Breast epithelium (tissue), 4 donors: ENCODE measurements at regions of chr1 and their contacts with region 1.

Region 1: DNA sequence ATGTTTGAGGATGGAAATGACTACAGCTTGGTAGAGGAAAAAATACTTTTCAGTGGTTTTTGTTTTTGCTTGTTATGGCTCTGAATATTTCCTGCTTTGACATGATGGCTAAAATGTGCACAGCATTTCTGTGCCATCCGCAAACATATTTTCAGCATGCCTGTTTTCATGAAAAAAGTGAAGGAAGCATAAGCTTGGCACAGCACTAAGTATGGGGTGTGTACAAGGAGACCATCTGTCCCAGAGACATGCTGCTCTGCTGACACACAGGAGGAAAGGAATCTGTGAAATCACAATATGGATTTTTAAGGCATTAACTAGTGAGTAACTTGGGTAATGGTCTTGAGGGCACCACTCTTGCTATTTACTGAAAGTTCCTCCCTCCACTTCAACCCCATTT is 595.5 kb downstream of the RWDD3 start:
- DNase-seq: no peak
- H3K4me3 ChIP-seq: no peak overlapping the region
- H3K27ac ChIP-seq: no peak overlapping the region
- H3K4me1 ChIP-seq: no peaks in the 10 kb centered on the region
- H3K27me3 ChIP-seq: no peaks in the 10 kb centered on the region
- CTCF ChIP-seq: no peak
- POLR2A ChIP-seq: no peak

Region 2: GRCh38 chr1:97739596-97740103 is 1910.1 kb after region 1 on chr1:
- intact Hi-C with region 1: loop called (anchors 5 kb)
- DNase-seq: no peak
- H3K4me3 ChIP-seq: no peak overlapping the region
- H3K27ac ChIP-seq: no peak overlapping the region
- H3K4me1 ChIP-seq: no peaks in the 10 kb centered on the region
- H3K27me3 ChIP-seq: no peaks in the 10 kb centered on the region
- CTCF ChIP-seq: no peak
- POLR2A ChIP-seq: no peak